PC-9 (cell line): ENCODE measurements at regions of chr16 and their contacts with region 1.

Region 1: DNA sequence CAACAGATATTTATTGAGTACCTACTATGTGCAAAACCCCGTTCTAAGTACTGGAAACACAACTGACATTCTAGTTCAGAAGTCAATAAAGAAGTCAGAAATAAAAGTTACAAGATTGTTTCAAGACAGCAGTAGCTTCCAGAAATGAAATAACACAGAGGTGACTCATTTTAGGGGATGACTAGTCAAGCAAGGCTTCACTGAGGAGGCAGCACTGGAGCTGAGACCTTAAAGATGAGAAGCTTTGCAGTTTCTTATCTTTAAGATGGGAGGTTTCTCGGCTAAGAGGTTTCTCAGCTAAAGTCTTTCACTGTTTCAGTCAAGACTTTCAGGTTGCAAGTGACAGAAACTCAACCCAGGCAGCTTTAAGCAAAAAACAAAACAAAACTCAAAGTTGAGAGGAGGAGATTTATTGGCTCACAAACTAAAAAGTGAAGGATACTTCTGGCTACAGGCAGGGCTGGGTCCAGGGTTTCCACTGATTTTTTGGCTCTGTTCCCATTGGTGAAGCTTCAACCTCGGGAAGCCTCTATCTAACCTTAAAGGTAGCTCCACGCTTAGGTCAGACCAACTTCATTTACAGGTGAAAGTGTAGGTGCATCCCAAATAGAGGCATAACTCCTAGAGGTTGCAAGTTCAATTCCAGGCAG is 7.4 kb upstream of the MMP2 start:
- DNase-seq: peak; percentile 41 to 92
- H3K4me3 ChIP-seq: peak overlapping the region; percentile 22; the same call in 1 of the 2 replicates
- H3K27ac ChIP-seq: peak overlapping the region; percentile 95
- H3K4me1 ChIP-seq: peaks cover 45% of the 10 kb centered on the region
- H3K27me3 ChIP-seq: no peaks in the 10 kb centered on the region
- CTCF ChIP-seq: no peak

Region 2: GRCh38 chr16:53773150-53773846 is 1698.3 kb before region 1 on chr16:
- CTCF ChIA-PET with region 1: no interaction called
- POLR2A ChIA-PET with region 1: no interaction called
- intact Hi-C with region 1: loop called (anchors 2 kb)
- DNase-seq: peak; percentile 34 to 69
- H3K4me3 ChIP-seq: no peak overlapping the region
- H3K27ac ChIP-seq: no peak overlapping the region
- H3K4me1 ChIP-seq: peaks cover 77% of the 10 kb centered on the region
- H3K27me3 ChIP-seq: no peaks in the 10 kb centered on the region
- CTCF ChIP-seq: peak; percentile 78

Region 3: GRCh38 chr16:55508941-55509931 is 37.7 kb after region 1 on chr16 and contains the start of gene LPCAT2:
- CTCF ChIA-PET with region 1: no interaction called
- POLR2A ChIA-PET with region 1: no interaction called
- intact Hi-C with region 1: loop called (anchors 2 kb)
- DNase-seq: peak; percentile 71 to 84
- H3K4me3 ChIP-seq: peak within 1 kb of the TSS; percentile 76
- H3K27ac ChIP-seq: peak within 1 kb of the TSS; percentile 41
- H3K4me1 ChIP-seq: peaks cover 17% of the 10 kb centered on the region
- H3K27me3 ChIP-seq: no peaks in the 10 kb centered on the region
- CTCF ChIP-seq: 0 out of 2 replicates have a peak, but pooled peaks have one; percentile 22
- total RNA-seq, gene LPCAT2: 87.7 and 92.6 TPM in 2 replicates

Region 4: GRCh38 chr16:55543472-55543871 is 71.9 kb after region 1 on chr16:
- CTCF ChIA-PET with region 1: no interaction called
- POLR2A ChIA-PET with region 1: no interaction called
- intact Hi-C with region 1: loop called (anchors 1 kb)
- DNase-seq: peak in 1 of 2 experiments; percentile 47
- H3K4me3 ChIP-seq: no peak overlapping the region
- H3K27ac ChIP-seq: no peak overlapping the region
- H3K4me1 ChIP-seq: peaks cover 10% of the 10 kb centered on the region; the same call in 1 of the 2 replicates
- H3K27me3 ChIP-seq: no peaks in the 10 kb centered on the region
- CTCF ChIP-seq: peak; percentile 74

Region 5: GRCh38 chr16:55597928-55598327 is 126.4 kb after region 1 on chr16:
- CTCF ChIA-PET with region 1: no interaction called
- POLR2A ChIA-PET with region 1: no interaction called
- intact Hi-C with region 1: no loop called
- DNase-seq: no peak
- H3K4me3 ChIP-seq: no peak overlapping the region
- H3K27ac ChIP-seq: no peak overlapping the region
- H3K4me1 ChIP-seq: no peaks in the 10 kb centered on the region
- H3K27me3 ChIP-seq: no peaks in the 10 kb centered on the region
- CTCF ChIP-seq: no peak

Region 6: GRCh38 chr16:55832758-55833540 is 361.4 kb after region 1 on chr16 and contains the start of gene CES1:
- CTCF ChIA-PET with region 1: no interaction called
- POLR2A ChIA-PET with region 1: no interaction called
- intact Hi-C with region 1: loop called (anchors 5 kb)
- DNase-seq: peak in 1 of 2 experiments; percentile 72
- H3K4me3 ChIP-seq: no peak within 1 kb of the TSS
- H3K27ac ChIP-seq: no peak within 1 kb of the TSS
- H3K4me1 ChIP-seq: peaks cover 35% of the 10 kb centered on the region
- H3K27me3 ChIP-seq: no peaks in the 10 kb centered on the region
- CTCF ChIP-seq: no peak
- total RNA-seq, gene CES1: 107 and 141 TPM in 2 replicates

Region 7: DNA sequence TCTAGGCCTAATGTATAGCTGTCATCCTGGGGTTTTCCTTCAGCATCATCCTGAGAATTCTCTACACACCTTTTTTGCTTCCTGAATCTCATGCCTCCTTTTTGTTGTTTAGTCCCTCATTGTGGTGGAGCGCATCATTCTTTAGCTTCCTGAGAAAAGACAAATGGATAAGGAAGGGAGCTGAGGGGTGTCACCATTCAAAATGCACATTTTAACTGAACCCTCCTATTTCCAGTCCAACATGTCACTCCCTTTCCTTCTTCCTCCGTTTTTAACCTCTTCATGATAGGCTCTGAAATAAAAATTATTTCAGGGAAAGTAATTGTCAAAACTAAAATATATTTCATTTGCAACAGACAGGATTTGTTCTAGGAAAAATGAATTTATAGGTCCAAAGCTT is 680.0 kb after region 1 on chr16:
- CTCF ChIA-PET with region 1: no interaction called
- POLR2A ChIA-PET with region 1: no interaction called
- intact Hi-C with region 1: no loop called
- DNase-seq: no peak
- H3K4me3 ChIP-seq: no peak overlapping the region
- H3K27ac ChIP-seq: no peak overlapping the region
- H3K4me1 ChIP-seq: no peaks in the 10 kb centered on the region
- H3K27me3 ChIP-seq: no peaks in the 10 kb centered on the region
- CTCF ChIP-seq: no peak

Region 8: DNA sequence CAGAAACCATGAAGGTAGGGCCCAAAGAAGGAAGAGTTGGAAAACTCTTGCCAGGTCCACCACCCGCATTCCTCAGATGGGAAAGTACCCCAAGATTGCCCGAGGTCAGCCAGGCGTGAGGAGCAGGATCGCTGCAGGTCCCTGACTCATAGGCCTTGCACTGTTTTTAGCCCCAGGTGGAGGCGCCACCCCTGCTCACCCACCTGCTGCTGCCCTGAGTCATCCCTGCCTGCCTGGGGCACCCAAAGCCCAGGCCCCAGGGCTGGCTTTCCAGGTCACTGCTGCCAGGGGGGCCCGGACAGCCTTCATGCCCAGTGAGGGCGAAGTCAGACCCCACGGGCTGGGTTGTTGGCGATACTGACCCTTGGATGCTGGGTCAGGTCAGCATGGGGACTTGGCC is 852.8 kb after region 1 on chr16:
- CTCF ChIA-PET with region 1: no interaction called
- POLR2A ChIA-PET with region 1: no interaction called
- intact Hi-C with region 1: loop called (anchors 5 kb)
- DNase-seq: peak; percentile 95 to 97
- H3K4me3 ChIP-seq: no peak overlapping the region
- H3K27ac ChIP-seq: peak overlapping the region; percentile 94
- H3K4me1 ChIP-seq: peaks cover 48% of the 10 kb centered on the region
- H3K27me3 ChIP-seq: no peaks in the 10 kb centered on the region
- CTCF ChIP-seq: no peak